ENCODE measurements at regions of chr17 and their contacts with region 1.

Region 1: GRCh38 chr17:74736513-74737298 is at the start of gene RAB37:
- DNase-seq: peak in 8 of 9 experiments; percentile 43 to 81 (median 62)
- ATAC-seq: peak; percentile 30
- H3K4me3 ChIP-seq: peak within 1 kb of the TSS; percentile 65 to 85
- H3K4me3 Mint-ChIP-seq: peak within 1 kb of the TSS; percentile 91
- H3K27ac ChIP-seq: peak within 1 kb of the TSS; percentile 47 to 55
- H3K27ac Mint-ChIP-seq: peak within 1 kb of the TSS; percentile 93
- H3K4me1 ChIP-seq: peaks cover 42% of the 10 kb centered on the region
- H3K4me1 Mint-ChIP-seq: peaks cover 51% of the 10 kb centered on the region
- H3K27me3 ChIP-seq: no peaks in the 10 kb centered on the region
- H3K27me3 Mint-ChIP-seq: no peaks in the 10 kb centered on the region
- CTCF ChIP-seq: peak; percentile 58
- total RNA-seq, gene RAB37: 33.7 to 36.0 TPM

Region 2: DNA sequence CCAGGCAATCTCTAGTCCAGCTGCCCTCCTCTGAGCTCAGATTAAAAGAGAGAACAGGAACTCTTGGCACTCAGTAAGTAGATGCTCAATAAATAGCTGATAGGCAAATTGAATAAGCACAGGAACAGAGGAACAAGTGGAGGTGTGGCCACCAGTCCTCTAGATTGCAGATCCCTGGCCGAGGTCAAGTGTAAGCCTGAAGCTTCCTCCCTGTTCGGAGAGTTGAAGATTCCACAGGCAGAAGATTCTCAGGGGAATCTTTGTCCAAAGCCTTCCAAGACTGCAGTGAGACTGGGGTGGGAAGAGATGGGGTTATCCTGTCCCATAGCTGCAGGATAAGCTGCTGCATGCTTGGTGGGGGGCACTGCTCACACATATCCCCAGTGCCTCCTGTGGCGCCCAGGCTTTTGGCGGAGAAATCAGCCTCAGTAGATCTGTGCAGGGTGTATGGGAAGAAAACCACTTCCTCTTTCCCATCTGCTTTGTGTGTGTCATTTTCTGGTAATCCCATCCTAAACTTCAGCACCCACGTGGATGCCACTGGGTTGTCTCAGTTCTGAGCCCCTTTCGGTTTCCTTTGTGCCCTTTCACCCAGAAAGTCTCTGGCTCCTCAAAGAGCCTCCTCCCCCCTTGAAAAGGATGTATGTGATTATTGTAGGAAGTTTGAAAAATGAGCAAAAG is 258.1 kb before region 1 on chr17:
- CTCF ChIA-PET with region 1: no interaction called
- POLR2A ChIA-PET with region 1: no interaction called
- intact Hi-C with region 1: loop called in 1 of 2 experiments (anchors 10 kb)
- DNase-seq: peak in 4 of 9 experiments; percentile 46 to 81 (median 52)
- ATAC-seq: peak; percentile 68
- H3K4me3 ChIP-seq: no peak overlapping the region
- H3K4me3 Mint-ChIP-seq: peak overlapping the region; percentile 47
- H3K27ac ChIP-seq: peak overlapping the region in 1 of 2 experiments; percentile 74
- H3K27ac Mint-ChIP-seq: peak overlapping the region; percentile 76
- H3K4me1 ChIP-seq: peaks cover 51% of the 10 kb centered on the region
- H3K4me1 Mint-ChIP-seq: peaks cover 55% of the 10 kb centered on the region
- H3K27me3 ChIP-seq: no peaks in the 10 kb centered on the region
- H3K27me3 Mint-ChIP-seq: no peaks in the 10 kb centered on the region
- CTCF ChIP-seq: no peak

Region 3: GRCh38 chr17:74544991-74545842 is 191.5 kb before region 1 on chr17:
- CTCF ChIA-PET with region 1: no interaction called
- POLR2A ChIA-PET with region 1: no interaction called
- intact Hi-C with region 1: no loop called
- DNase-seq: no peak
- ATAC-seq: no peak
- H3K4me3 ChIP-seq: no peak overlapping the region
- H3K4me3 Mint-ChIP-seq: no peak overlapping the region
- H3K27ac ChIP-seq: no peak overlapping the region
- H3K27ac Mint-ChIP-seq: no peak overlapping the region
- H3K4me1 ChIP-seq: no peaks in the 10 kb centered on the region
- H3K4me1 Mint-ChIP-seq: no peaks in the 10 kb centered on the region
- H3K27me3 ChIP-seq: no peaks in the 10 kb centered on the region
- H3K27me3 Mint-ChIP-seq: peaks cover 5% of the 10 kb centered on the region
- CTCF ChIP-seq: no peak

Region 4: DNA sequence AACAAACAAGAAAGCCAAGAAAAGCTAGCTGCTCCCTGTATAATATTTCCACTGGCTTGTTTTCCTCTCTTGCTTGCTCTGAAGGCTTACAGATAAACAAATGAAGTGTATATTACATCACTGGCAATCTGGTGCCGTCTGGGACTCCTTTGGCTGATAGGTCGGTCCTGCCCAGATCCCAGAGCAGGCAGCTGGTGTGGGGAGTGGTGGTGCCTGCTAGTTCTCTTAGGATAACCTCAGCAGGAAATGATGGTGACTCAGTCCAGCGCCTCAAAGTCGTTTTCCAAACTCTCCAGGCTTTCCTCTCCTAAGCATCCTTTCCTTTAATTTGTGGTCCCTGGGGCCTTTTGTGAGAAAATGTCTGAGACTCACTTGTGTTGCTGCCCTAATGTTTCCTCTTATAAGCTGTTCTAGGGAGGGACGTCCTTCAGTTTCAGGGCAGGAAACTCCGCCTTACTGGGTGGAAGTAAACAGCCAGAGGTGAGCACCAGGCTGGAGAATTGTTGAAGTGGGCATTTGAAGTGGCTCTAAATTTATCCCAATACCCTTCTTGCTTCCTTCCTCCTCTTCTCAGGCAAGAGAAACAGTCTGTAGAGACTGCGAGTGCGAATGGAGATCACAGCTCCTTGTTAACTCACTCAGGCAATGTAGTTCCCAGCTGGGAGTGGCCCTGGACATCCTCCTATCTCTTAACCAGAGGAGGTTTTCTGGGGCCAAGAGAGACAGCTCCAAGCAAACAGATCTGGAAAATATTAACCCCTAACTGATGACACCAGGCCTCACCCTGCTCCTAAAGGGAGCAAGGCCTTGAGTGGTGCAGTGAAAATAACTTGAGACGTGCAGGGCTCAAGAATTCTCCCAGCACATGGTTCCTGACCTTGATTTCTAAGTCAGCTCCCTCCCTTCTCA is 58.9 kb before region 1 on chr17:
- CTCF ChIA-PET with region 1: interaction called, 13 read pairs
- POLR2A ChIA-PET with region 1: interaction called, 7 read pairs
- intact Hi-C with region 1: no loop called
- DNase-seq: no peak
- ATAC-seq: no peak
- H3K4me3 ChIP-seq: no peak overlapping the region
- H3K4me3 Mint-ChIP-seq: peak overlapping the region; percentile 2
- H3K27ac ChIP-seq: no peak overlapping the region
- H3K27ac Mint-ChIP-seq: peak overlapping the region; percentile 28
- H3K4me1 ChIP-seq: peaks cover 15% of the 10 kb centered on the region
- H3K4me1 Mint-ChIP-seq: peaks cover 20% of the 10 kb centered on the region
- H3K27me3 ChIP-seq: peaks cover 0 to 8% of the 10 kb centered on the region in 2 experiments
- H3K27me3 Mint-ChIP-seq: peaks cover 21% of the 10 kb centered on the region
- CTCF ChIP-seq: no peak

Region 5: DNA sequence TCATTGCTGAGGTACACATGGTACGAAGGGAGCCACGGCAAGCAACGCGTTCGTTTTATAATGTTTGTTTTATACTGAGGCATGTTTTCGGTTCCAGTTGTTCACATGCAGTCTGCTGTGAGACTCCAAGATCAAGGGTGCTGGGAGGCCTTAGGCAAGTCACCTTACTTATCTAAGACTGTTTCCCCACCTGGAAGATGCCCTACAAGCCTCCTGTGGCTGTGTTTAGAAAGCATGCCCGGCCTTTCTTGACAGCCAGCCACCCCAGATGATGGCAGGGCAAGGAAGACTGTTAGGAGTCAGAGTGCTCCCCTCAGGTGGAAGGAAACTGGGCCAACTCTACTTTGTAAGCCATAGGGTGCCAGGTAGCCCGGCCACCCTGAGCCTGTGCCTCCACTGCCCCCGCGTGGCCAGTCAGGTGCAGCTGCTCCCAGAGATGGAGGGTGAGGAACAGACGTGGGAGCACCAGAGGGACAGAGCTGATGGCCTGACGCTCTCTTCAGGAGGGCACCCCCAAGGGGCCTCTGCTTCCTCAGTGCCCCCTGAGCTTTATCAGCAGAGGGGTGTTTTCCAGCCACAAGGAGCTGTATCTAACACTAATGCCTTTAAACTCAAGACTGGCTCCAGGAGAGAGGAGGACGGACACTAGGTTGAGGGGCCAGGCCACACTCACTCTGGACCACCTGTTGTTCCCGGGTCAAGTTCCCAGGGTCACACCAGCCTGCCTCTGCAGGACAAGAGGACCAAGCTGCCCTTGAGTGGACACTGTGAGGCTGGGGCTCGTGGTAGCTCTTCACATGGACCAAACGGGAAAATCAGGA is 34.0 kb after region 1 on chr17:
- CTCF ChIA-PET with region 1: interaction called, 92 read pairs
- POLR2A ChIA-PET with region 1: interaction called, 22 read pairs
- intact Hi-C with region 1: no loop called
- DNase-seq: peak; percentile 62 to 88 (median 78)
- ATAC-seq: peak; percentile 95
- H3K4me3 ChIP-seq: no peak overlapping the region
- H3K4me3 Mint-ChIP-seq: no peak overlapping the region
- H3K27ac ChIP-seq: peak overlapping the region in 1 of 2 experiments; percentile 18
- H3K27ac Mint-ChIP-seq: peak overlapping the region; percentile 81
- H3K4me1 ChIP-seq: peaks cover 21% of the 10 kb centered on the region
- H3K4me1 Mint-ChIP-seq: peaks cover 36% of the 10 kb centered on the region
- H3K27me3 ChIP-seq: no peaks in the 10 kb centered on the region
- H3K27me3 Mint-ChIP-seq: no peaks in the 10 kb centered on the region
- CTCF ChIP-seq: peak; percentile 70

Region 6: GRCh38 chr17:74864866-74865395 is 128.2 kb after region 1 on chr17:
- CTCF ChIA-PET with region 1: interaction called, 43 read pairs
- POLR2A ChIA-PET with region 1: no interaction called
- intact Hi-C with region 1: no loop called
- DNase-seq: peak; percentile 46 to 84 (median 73)
- ATAC-seq: peak; percentile 75
- H3K4me3 ChIP-seq: no peak overlapping the region
- H3K4me3 Mint-ChIP-seq: no peak overlapping the region
- H3K27ac ChIP-seq: no peak overlapping the region
- H3K27ac Mint-ChIP-seq: no peak overlapping the region
- H3K4me1 ChIP-seq: peaks cover 21% of the 10 kb centered on the region
- H3K4me1 Mint-ChIP-seq: peaks cover 13% of the 10 kb centered on the region
- H3K27me3 ChIP-seq: peaks cover 8 to 21% of the 10 kb centered on the region in 2 experiments
- H3K27me3 Mint-ChIP-seq: peaks cover 13% of the 10 kb centered on the region
- CTCF ChIP-seq: peak; percentile 92